ENCODE measurements at regions of chr10 and their contacts with region 1.

Region 1: GRCh38 chr10:73495884-73496674 is at the start of gene PPP3CB:
- DNase-seq: peak; percentile 88
- H3K4me3 ChIP-seq: peak within 1 kb of the TSS; percentile 63 to 85
- H3K27ac ChIP-seq: peak within 1 kb of the TSS; percentile 86 to 97
- H3K4me1 ChIP-seq: no peaks in the 10 kb centered on the region
- H3K27me3 ChIP-seq: no peaks in the 10 kb centered on the region
- CTCF ChIP-seq: no peak
- POLR2A ChIP-seq: no peak
- total RNA-seq, gene PPP3CB: 38.6 to 44.3 TPM

Region 2: DNA sequence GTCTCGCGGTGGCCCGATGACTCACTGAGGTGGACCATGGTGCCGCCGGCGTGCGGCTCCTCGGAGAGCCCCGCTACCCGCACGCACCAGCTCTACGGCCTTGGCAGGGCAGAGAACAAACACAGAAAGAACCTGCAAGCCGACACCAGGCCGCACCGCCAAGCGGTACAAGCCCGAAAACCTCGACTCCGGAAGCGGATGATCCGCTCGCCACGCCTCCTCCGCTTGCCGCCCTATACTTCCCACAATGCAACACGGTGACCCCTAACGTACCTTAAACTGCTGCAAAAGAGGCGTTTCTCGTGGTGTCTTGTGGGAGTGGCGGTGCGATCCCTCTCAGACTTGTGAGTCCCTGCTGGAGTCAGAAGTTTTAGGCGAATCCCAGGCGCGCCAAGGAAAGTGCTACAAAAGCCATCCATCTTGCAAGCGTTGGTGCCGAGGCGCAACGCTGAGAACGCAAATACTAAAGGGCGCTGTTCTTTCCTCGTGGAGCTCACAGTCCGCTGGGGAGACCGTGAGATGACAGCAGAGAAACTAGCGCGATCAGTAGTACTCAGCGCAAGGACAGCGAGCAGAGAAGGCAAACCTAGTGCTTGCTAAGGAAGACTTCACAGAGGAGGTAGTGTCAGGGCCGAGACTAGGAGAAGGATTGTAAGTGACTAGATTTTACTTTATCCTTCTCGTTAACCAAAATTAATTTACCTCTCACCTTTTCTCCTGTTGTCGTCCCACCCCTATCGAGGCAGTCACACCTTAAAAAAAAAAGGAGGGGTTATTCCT is 243.4 kb before region 1 on chr10 and contains the start of gene MRPS16:
- intact Hi-C with region 1: loop called (anchors 10 kb)
- DNase-seq: peak; percentile 95
- H3K4me3 ChIP-seq: peak within 1 kb of the TSS; percentile 74 to 87
- H3K27ac ChIP-seq: peak within 1 kb of the TSS; percentile 84 to 87
- H3K4me1 ChIP-seq: peaks cover 9% of the 10 kb centered on the region
- H3K27me3 ChIP-seq: no peaks in the 10 kb centered on the region
- CTCF ChIP-seq: peak in 1 of 4 experiments; percentile 26
- POLR2A ChIP-seq: peak; percentile 76
- total RNA-seq, gene MRPS16: 47.0 to 51.9 TPM

Region 3: GRCh38 chr10:73413528-73414229 is 82.4 kb before region 1 on chr10 and contains the start of gene ANXA7:
- intact Hi-C with region 1: loop called (anchors 10 kb)
- DNase-seq: peak; percentile 93
- H3K4me3 ChIP-seq: peak within 1 kb of the TSS; percentile 86 to 91
- H3K27ac ChIP-seq: peak within 1 kb of the TSS; percentile 98
- H3K4me1 ChIP-seq: no peaks in the 10 kb centered on the region
- H3K27me3 ChIP-seq: no peaks in the 10 kb centered on the region
- CTCF ChIP-seq: peak in 3 of 4 experiments; percentile 10 to 47 (median 38)
- POLR2A ChIP-seq: peak; percentile 72
- total RNA-seq, gene ANXA7: 98.9 to 117 TPM